HEK293 (cell line): ENCODE measurements at regions of chr5 and their contacts with region 1.

Region 1: DNA sequence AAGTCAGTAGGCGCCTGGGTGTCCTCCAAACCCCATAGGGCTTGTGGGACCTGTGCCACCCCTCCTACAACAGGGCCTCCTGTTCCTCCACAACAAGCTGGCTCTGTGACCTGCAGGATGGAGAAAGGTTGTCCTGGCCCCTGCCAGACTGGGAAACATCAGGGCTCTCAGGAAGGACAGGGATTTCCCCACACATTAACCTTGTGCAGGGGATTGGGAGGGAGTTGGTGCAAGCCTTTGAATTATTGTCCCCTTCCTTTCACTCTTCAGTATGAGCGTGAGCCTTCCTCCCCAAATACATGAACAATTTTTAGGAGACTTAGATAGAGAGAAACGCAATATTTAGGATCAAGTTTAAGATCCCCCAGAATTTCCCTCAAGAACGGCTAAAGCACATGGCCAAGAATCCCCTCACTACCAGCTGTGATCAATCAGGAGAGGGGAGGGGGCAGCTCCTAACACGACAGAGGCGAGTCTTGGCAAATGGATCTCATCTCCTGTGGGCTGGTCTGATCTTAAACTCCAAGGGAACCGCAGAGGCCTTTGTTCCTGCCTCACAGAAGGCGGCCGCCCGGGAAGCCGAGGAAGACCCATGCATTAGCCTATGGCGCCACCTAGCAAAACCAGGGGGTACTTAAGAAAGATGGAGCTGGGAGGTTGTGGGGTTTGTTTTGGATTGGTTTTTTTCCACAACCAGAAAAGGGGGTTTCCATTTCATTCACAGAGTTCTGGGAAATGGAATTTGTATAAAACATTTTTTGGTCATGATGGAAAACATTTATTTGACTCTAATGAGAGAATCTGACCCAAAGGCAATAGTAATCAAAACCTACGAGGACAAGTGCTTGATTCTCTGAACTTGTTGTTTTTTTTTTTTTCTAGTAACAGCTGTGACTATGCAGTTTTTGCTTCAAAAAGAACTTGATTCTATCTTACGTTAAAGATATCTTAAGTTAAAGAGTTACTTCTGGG is 36.1 kb upstream of the OSMR start:
- H3K4me3 ChIP-seq: no peak overlapping the region
- H3K27ac ChIP-seq: no peak overlapping the region; the same call in 1 of the 2 replicates
- H3K4me1 ChIP-seq: peaks cover 14% of the 10 kb centered on the region
- CTCF ChIP-seq: peak; percentile 92

Region 2: GRCh38 chr5:38382898-38383297 is 426.8 kb before region 1 on chr5:
- CTCF ChIA-PET with region 1: interaction called, 52 read pairs
- POLR2A ChIA-PET with region 1: no interaction called
- H3K4me3 ChIP-seq: no peak overlapping the region
- H3K27ac ChIP-seq: no peak overlapping the region
- H3K4me1 ChIP-seq: peaks cover 11% of the 10 kb centered on the region
- CTCF ChIP-seq: peak; percentile 83

Region 3: DNA sequence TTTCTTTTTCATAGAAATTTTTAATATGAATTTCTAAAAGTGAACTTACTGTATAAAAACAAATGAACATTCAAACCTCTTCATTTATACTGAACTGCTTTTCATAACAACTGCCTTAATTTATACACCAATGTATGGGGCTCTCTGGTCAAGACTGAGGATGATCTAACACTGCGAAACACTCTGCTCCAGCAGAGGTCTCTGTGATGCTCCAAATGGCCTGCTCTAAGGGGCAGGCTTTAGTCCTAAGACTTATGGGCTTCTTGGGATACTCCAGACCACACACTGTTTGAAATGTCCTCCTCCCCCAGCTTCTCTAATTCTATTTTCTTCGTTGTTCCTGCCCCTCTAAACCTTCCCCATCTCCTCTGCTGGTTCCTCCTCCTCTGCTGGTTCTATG is 311.7 kb before region 1 on chr5:
- CTCF ChIA-PET with region 1: interaction called, 18 read pairs
- POLR2A ChIA-PET with region 1: no interaction called
- H3K4me3 ChIP-seq: no peak overlapping the region
- H3K27ac ChIP-seq: no peak overlapping the region
- H3K4me1 ChIP-seq: no peaks in the 10 kb centered on the region
- CTCF ChIP-seq: peak; percentile 31; the same call in 1 of the 2 replicates

Region 4: DNA sequence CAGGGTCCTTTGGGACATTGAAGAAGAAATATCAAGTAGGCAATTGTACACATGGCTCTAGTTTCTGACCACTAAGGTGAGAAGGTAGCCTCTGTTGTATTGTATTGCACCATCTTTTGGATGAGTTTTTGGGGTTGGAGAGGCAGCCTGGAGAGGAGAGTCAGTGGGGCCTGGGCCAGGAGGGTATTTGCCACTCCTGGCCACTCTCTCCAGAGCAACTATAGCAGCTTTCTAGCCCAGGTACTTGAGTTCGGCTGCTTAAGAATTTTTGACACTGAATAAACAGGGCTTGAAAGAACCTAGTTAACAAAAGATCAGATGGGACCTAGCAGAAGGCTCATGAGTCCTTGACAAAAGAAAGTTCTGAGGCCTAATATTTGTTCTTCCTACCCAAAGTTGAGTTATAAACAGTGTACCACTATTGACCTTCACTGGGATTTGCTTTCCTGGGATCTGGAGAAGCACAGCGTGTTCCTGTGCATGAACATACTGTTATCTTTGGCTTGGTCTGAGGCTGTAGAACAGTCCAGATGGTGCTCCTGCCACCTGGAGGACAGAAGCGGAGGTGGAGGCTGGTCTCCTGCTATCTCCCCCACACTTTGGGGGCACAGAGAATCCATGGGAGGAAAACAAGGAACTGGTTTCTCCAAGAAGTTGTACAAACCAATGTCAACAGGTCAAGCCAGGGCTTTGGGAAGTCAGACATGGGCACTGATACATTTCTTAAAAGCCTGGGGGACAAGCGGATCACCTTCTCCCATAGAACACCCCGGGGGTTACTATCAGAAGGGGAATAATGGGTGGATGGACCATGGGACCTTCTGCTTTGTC is 142.8 kb before region 1 on chr5:
- CTCF ChIA-PET with region 1: interaction called, 42 read pairs
- POLR2A ChIA-PET with region 1: no interaction called
- H3K4me3 ChIP-seq: no peak overlapping the region
- H3K27ac ChIP-seq: no peak overlapping the region
- H3K4me1 ChIP-seq: peaks cover 5% of the 10 kb centered on the region
- CTCF ChIP-seq: peak; percentile 77

Region 5: GRCh38 chr5:38780950-38781349 is 28.7 kb before region 1 on chr5:
- CTCF ChIA-PET with region 1: interaction called, 18 read pairs
- POLR2A ChIA-PET with region 1: interaction called, 10 read pairs
- H3K4me3 ChIP-seq: no peak overlapping the region
- H3K27ac ChIP-seq: no peak overlapping the region
- H3K4me1 ChIP-seq: peaks cover 19% of the 10 kb centered on the region
- CTCF ChIP-seq: no peak

Region 6: GRCh38 chr5:38878391-38879077 is 68.9 kb after region 1 on chr5:
- CTCF ChIA-PET with region 1: no interaction called
- POLR2A ChIA-PET with region 1: no interaction called
- H3K4me3 ChIP-seq: no peak overlapping the region
- H3K27ac ChIP-seq: no peak overlapping the region
- H3K4me1 ChIP-seq: no peaks in the 10 kb centered on the region
- CTCF ChIP-seq: no peak

Region 7: DNA sequence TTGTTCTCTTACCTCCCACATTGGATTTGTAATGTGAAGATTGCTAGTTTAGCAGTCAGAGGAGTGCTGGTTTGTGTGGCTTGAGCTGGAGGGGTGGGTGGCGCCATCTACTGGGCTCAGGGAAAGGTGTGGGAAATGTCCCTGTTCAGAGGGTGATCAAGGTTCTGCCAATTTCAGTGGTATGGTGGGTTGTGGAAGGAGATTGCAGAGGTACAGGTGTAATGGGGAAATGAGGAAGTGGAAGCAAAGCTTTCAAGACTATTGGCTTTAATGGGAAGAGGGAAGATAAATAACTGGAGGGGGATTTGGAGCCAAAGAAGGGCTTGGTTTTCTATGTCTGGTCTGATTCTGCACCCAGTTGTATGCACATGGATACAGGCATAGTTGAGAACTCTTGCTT is 112.5 kb after region 1 on chr5:
- CTCF ChIA-PET with region 1: interaction called, 52 read pairs
- POLR2A ChIA-PET with region 1: no interaction called
- H3K4me3 ChIP-seq: no peak overlapping the region
- H3K27ac ChIP-seq: no peak overlapping the region
- H3K4me1 ChIP-seq: no peaks in the 10 kb centered on the region
- CTCF ChIP-seq: peak; percentile 85